Ascending aorta (tissue), 2 donors: ENCODE measurements at regions of chr4 and their contacts with region 1.

Region 1: DNA sequence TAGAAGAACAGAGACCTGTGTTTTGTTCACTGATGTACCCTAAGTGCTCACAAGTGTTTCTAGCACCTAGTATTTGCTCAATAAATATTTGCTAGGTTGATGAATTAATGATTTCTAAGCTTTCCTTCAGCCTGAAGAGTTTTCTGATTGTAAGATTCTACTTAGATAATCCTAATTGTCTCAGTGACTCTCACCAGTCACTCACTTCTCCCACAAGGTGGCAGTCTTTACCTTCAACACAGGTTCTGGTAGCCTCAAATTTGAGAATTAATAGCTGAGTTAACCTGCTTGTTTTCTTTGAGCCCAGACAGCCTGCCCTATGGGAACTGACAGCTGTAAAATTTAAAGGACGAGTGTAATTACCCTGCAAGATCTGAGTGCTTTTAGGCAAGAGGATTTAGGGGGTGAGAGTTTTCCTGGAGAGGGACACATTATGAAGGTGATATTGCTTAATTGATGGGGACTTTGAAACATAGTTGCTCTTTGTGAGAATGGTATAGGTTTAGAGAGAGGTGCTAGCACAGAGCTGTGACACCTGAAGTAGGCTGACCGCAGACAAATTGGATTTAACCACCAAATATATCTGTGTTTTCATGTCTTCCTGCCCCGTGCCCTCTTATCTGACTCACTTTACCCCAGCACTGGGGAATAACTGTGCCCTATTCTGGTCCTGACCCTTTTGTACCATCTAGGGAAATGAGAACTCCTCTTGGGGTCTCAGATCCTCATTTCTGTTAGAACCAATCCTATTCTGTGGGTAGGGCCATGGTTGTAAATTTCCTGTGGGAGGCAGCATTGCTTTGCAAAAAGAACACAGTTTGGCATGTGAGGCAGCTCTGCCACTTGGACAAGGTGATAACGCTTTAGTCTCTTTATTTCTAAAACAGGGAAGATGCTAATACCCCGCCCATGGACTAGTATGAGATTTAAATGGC is 27.7 kb downstream of the CD38 start:
- DNase-seq: no peak
- H3K4me3 ChIP-seq: no peak overlapping the region
- H3K27ac ChIP-seq: no peak overlapping the region
- H3K4me1 ChIP-seq: no peaks in the 10 kb centered on the region
- H3K27me3 ChIP-seq: no peaks in the 10 kb centered on the region
- CTCF ChIP-seq: peak in 2 of 3 experiments; percentile 60 to 76

Region 2: DNA sequence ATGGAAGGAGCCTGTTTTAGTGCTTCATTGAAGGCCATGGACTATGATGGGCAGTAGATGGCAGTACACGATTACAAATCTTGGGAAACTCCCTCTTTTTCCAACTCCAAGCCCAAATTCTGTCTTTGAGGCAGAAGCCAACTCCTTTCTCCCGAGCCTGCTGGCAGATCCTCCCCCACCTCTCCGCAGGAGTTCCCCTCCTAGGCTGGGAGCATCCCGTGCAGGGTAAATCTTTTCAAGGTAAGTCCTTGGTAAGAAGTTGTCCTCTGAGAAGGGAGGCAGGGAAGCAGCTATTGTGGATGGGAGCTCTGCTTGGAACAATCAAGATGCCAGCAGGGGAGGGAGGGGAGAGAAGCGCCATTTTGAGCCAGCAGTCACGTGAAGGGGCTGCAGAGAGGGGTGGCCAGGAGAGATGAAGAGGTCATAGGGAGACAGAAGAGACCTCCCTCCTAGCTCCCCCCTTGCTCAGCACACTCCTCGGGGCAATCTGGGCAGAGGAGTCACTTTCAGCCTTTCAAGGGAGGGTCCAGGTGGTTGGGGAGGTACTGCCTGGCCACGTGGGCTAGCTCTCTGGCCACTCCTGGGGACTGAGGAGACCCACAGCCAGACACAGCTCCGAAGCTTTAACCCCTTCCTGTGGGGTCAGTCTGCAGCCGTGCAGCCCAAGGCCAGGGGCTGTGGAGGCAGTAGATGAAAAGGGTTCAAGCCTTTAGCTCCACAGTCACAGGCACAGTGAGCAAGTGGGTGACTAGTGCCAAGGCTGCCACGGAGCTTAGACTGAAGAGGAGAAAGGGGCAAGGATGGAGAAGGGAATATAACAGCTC is 326.5 kb before region 1 on chr4:
- intact Hi-C with region 1: loop called (anchors 10 kb)
- DNase-seq: no peak
- H3K4me3 ChIP-seq: peak overlapping the region; percentile 51 to 71
- H3K27ac ChIP-seq: peak overlapping the region; percentile 76 to 78
- H3K4me1 ChIP-seq: peaks cover 3 to 10% of the 10 kb centered on the region in 2 donors
- H3K27me3 ChIP-seq: no peaks in the 10 kb centered on the region
- CTCF ChIP-seq: peak; percentile 59 to 70 (median 68)

Region 3: DNA sequence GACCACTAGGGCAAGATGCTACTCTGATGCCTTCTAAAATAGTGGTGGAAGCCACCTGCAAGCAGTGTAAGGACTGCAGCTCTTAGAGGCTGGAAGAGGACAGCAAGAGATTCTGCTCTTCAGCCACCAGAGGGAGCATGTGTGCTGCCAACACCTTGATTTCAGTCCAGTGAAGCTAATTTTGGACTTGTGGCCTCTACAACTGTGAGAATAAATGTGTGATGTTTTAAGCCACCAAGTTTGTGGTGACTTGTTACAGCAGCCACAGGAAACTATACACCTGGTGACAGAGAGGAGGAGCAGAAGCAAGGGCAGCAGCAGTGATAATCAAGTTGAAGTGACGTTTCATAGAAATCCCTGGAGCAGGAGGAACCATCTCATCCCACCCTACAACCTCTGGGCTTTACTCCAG is 76.8 kb after region 1 on chr4:
- intact Hi-C with region 1: loop called (anchors 5 kb)
- DNase-seq: no peak
- H3K4me3 ChIP-seq: no peak overlapping the region
- H3K27ac ChIP-seq: no peak overlapping the region
- H3K4me1 ChIP-seq: no peaks in the 10 kb centered on the region
- H3K27me3 ChIP-seq: no peaks in the 10 kb centered on the region
- CTCF ChIP-seq: peak; percentile 59 to 83 (median 79)

Region 4: GRCh38 chr4:15956179-15956850 is 150.5 kb after region 1 on chr4:
- intact Hi-C with region 1: loop called (anchors 1 kb)
- DNase-seq: peak; percentile 36 to 86
- H3K4me3 ChIP-seq: no peak overlapping the region
- H3K27ac ChIP-seq: no peak overlapping the region
- H3K4me1 ChIP-seq: no peaks in the 10 kb centered on the region
- H3K27me3 ChIP-seq: no peaks in the 10 kb centered on the region
- CTCF ChIP-seq: peak; percentile 73 to 87 (median 86)

Region 5: DNA sequence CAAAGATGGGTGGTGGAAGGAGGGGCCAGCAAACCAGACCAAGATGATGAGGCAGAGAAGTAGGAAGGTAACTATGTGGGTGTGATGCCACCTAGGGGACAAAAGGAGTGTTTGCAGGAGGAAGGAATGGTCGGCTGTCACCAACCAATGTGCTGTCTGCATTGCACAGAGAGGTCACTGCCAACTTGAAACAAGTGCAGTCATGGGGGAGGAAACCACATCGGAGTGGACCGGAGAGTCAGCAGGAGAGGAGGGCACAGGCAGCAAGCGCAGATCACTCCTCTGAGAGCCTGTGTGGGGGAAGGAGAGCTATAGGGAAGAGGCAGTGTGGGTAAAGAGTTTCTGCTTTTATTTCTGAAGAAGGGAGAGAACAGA is 195.6 kb after region 1 on chr4:
- intact Hi-C with region 1: loop called (anchors 2 kb)
- DNase-seq: peak in 1 of 2 donors; percentile 74
- H3K4me3 ChIP-seq: no peak overlapping the region
- H3K27ac ChIP-seq: no peak overlapping the region
- H3K4me1 ChIP-seq: no peaks in the 10 kb centered on the region
- H3K27me3 ChIP-seq: no peaks in the 10 kb centered on the region
- CTCF ChIP-seq: peak; percentile 66 to 77 (median 66)